Thyroid gland (tissue), 4 donors: ENCODE measurements at regions of chr7 and their contacts with region 1.

Region 1: GRCh38 chr7:44999245-45000095 is 531 bp upstream of the CCM2 start:
- DNase-seq: peak; percentile 100
- H3K4me3 ChIP-seq: peak overlapping the region; percentile 3 to 32 (median 30)
- H3K27ac ChIP-seq: peak overlapping the region; percentile 44 to 74 (median 59)
- H3K4me1 ChIP-seq: peaks cover 6 to 40% of the 10 kb centered on the region in 2 donors
- H3K27me3 ChIP-seq: no peaks in the 10 kb centered on the region
- CTCF ChIP-seq: no peak
- POLR2A ChIP-seq: peak in 1 of 2 donors; percentile 57

Region 2: DNA sequence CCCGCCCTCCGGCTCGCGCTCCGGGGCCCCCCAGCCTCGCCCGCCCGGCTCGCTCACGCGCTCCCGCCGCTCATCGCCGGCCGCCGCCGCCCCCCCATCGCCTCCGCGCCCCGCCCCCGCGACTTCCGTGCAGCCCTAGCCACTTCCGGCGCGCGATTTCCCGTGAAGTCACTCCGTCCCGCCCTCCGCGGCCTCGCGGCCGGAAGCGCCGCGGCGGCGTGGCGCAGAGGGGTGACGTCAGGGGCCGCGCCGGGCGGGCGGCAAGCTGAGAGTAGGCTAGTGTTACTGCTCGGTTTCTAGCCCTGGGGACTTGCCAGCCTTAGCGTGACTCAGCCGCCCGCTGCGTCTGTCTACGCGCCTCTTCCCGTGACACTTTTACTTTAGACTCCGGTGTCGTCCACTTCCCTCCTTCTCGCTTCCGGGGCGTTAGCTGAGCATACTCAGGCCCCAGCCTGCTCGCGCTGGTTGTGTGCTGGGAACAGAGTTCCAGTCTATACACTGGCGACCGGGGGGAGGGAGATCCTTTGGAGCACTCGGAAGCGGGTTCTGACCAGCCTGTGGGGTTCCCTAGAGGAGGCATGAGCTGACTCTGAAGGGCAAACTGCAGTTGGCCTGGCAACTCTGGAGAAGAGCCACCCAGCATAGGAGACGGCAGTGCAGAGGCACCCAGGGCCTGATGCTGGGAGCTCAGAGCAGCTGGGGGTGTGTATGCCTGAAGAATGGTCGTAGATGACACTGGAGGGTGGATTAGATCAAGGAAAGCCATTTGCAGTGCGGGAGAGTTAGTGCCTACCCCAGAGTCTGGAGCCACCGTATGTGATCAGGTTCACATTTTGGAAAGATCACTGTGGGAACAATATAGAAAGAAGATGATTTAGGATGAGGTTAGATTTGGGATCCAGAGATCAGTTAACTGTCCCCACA is 113.8 kb before region 1 on chr7 and contains the start of gene PURB:
- intact Hi-C with region 1: loop called (anchors 10 kb)
- DNase-seq: peak; percentile 94
- H3K4me3 ChIP-seq: peak within 1 kb of the TSS; percentile 65 to 93 (median 71)
- H3K27ac ChIP-seq: peak within 1 kb of the TSS; percentile 92 to 97 (median 94)
- H3K4me1 ChIP-seq: peaks cover 38 to 39% of the 10 kb centered on the region in 2 donors
- H3K27me3 ChIP-seq: no peaks in the 10 kb centered on the region
- CTCF ChIP-seq: no peak
- POLR2A ChIP-seq: peak; percentile 74 to 96
- total RNA-seq, gene PURB: 25.6 to 47.4 (median 31.5) TPM